Endothelial cell of umbilical vein (primary cell): ENCODE measurements at regions of chr15 and their contacts with region 1.

Region 1: DNA sequence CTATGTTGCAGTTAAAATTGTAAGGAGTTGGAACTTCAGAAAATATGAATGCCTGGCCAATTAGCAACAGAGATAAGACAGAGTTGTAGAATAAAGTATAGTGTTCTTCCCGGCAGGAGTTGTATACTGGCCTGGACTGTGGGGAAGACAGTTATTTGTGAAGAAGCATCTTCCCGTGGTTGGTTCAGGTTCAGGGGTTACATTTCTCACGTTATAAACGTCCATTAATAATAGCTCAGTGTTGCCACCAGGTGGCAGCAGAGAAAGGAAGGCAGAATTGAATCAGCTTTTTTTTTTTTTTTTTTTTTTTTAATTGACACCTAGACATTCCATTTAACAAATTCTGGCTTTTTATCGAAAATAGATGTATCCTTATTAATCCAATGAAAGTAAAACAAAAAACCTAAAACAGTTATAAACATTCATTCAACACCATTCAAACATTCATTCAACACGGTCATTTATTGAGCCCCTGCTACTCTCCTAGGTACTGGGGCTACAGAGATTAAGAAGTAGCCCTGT is 66.4 kb upstream of the NR2E3 start:
- DNase-seq: peak; percentile 53
- H3K4me3 ChIP-seq: no peak overlapping the region
- H3K27ac ChIP-seq: no peak overlapping the region
- H3K4me1 ChIP-seq: peaks cover 19% of the 10 kb centered on the region
- H3K27me3 ChIP-seq: no peaks in the 10 kb centered on the region
- CTCF ChIP-seq: peak; percentile 55 to 59
- POLR2A ChIP-seq: no peak

Region 2: GRCh38 chr15:71511796-71512681 is 231.9 kb before region 1 on chr15:
- CTCF ChIA-PET with region 1: no interaction called
- POLR2A ChIA-PET with region 1: no interaction called
- dilution Hi-C with region 1: no loop called
- intact Hi-C with region 1: no loop called
- DNase-seq: no peak
- H3K4me3 ChIP-seq: no peak overlapping the region
- H3K27ac ChIP-seq: no peak overlapping the region
- H3K4me1 ChIP-seq: no peaks in the 10 kb centered on the region
- H3K27me3 ChIP-seq: peaks cover 0 to 2% of the 10 kb centered on the region in 2 experiments
- CTCF ChIP-seq: no peak
- POLR2A ChIP-seq: no peak

Region 3: DNA sequence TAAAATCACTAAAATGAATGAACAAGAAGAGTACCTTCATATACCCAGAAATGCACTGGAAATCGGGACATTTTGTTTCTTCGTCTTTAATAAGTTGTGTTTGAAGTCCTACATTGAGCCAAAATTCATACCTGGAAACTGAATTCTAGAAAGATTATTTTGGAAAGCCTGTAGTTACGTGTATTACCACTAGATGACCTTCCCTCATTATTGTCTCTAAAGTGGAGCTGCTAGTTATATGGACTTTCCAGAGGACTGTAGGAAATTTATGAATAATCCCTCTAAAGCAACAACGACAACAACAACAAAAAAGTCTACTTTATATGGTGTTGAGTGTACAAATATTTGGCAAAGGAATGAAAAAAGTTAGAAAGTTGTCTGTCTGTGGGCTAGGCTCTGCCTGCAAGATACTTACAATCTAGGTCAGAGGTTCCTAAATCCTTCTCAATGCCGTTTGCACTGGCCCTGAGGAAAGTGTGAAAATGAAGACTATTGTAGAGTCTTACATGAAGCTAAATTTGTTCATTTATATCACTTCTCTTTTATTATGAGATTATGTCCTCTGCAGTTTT is 168.4 kb before region 1 on chr15:
- CTCF ChIA-PET with region 1: interaction called, 24 read pairs
- POLR2A ChIA-PET with region 1: no interaction called
- dilution Hi-C with region 1: no loop called
- intact Hi-C with region 1: no loop called
- DNase-seq: peak; percentile 24
- H3K4me3 ChIP-seq: no peak overlapping the region
- H3K27ac ChIP-seq: no peak overlapping the region
- H3K4me1 ChIP-seq: peaks cover 12% of the 10 kb centered on the region
- H3K27me3 ChIP-seq: no peaks in the 10 kb centered on the region
- CTCF ChIP-seq: peak; percentile 25 to 36
- POLR2A ChIP-seq: no peak

Region 4: DNA sequence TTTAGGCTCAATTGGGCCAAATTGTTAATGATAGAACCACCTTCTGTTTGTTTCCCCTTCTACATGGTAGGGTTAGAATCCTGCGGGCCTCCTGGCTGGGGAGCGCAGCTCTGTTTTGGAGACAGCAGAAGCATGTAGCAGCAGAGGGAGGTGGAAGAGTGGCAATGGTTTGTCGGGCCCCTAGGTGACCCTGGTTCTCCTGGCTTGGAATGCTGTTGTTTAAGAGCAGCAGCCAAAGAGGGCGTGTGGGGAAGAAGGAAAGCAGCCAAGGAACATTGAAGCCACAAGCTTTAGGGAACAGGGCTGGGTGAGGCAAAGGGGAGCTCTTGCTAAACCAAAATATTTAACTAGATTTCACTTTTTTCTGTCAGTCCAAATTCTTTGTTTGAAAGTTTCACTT is 147.2 kb before region 1 on chr15:
- CTCF ChIA-PET with region 1: no interaction called
- POLR2A ChIA-PET with region 1: no interaction called
- dilution Hi-C with region 1: no loop called
- intact Hi-C with region 1: no loop called
- DNase-seq: no peak
- H3K4me3 ChIP-seq: no peak overlapping the region
- H3K27ac ChIP-seq: no peak overlapping the region
- H3K4me1 ChIP-seq: no peaks in the 10 kb centered on the region
- H3K27me3 ChIP-seq: no peaks in the 10 kb centered on the region
- CTCF ChIP-seq: no peak
- POLR2A ChIP-seq: no peak

Region 5: GRCh38 chr15:71639471-71639870 is 104.5 kb before region 1 on chr15:
- CTCF ChIA-PET with region 1: no interaction called
- POLR2A ChIA-PET with region 1: no interaction called
- dilution Hi-C with region 1: no loop called
- intact Hi-C with region 1: no loop called
- DNase-seq: no peak
- H3K4me3 ChIP-seq: no peak overlapping the region
- H3K27ac ChIP-seq: no peak overlapping the region
- H3K4me1 ChIP-seq: peaks cover 7% of the 10 kb centered on the region
- H3K27me3 ChIP-seq: no peaks in the 10 kb centered on the region
- CTCF ChIP-seq: no peak
- POLR2A ChIP-seq: no peak

Region 6: DNA sequence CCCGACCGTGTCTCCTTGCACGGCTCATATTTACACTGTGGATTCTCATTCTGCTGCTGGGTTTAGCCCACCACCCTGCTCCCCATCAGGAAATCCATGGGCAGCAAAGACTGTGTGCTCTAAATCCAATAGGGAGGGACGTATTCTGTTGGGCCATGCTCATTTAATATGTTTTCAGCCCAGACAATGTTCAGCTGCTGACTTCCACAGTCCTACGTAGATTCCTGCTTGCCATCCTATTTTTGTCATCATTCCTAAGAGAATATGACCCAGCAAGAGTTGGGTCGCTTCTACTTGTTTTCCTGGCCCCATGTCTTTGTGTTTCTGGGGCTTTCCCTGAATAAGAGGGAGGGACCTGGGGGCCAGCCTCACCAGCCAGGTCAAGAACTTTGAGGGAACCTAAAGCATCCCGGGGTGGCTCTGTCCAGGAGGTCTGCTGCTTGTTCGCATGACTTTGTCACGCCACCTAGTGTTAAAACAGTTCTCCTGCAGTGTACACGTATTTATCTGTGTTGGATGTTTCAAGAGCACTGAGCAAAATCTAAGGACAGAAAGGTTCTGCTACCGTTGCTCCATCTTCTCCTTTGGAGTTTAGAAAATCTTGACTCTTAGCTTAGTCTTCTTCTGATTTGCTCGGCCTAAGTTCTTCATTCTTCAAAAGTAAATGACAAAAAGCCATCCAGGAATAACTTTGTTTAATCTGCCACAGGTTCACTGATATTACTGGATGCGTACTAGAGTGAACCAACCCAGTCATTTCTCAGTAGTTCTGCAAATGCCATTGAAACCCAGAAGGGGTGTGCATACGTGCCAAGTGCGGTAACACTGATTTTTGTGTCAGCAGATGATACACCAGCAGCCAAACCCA is 13.4 kb before region 1 on chr15:
- CTCF ChIA-PET with region 1: interaction called, 16 read pairs
- POLR2A ChIA-PET with region 1: no interaction called
- dilution Hi-C with region 1: no loop called
- intact Hi-C with region 1: no loop called
- DNase-seq: peak; percentile 66
- H3K4me3 ChIP-seq: no peak overlapping the region
- H3K27ac ChIP-seq: no peak overlapping the region
- H3K4me1 ChIP-seq: no peaks in the 10 kb centered on the region
- H3K27me3 ChIP-seq: peaks cover 0 to under 1% of the 10 kb centered on the region in 2 experiments
- CTCF ChIP-seq: peak; percentile 67 to 76
- POLR2A ChIP-seq: no peak

Region 7: DNA sequence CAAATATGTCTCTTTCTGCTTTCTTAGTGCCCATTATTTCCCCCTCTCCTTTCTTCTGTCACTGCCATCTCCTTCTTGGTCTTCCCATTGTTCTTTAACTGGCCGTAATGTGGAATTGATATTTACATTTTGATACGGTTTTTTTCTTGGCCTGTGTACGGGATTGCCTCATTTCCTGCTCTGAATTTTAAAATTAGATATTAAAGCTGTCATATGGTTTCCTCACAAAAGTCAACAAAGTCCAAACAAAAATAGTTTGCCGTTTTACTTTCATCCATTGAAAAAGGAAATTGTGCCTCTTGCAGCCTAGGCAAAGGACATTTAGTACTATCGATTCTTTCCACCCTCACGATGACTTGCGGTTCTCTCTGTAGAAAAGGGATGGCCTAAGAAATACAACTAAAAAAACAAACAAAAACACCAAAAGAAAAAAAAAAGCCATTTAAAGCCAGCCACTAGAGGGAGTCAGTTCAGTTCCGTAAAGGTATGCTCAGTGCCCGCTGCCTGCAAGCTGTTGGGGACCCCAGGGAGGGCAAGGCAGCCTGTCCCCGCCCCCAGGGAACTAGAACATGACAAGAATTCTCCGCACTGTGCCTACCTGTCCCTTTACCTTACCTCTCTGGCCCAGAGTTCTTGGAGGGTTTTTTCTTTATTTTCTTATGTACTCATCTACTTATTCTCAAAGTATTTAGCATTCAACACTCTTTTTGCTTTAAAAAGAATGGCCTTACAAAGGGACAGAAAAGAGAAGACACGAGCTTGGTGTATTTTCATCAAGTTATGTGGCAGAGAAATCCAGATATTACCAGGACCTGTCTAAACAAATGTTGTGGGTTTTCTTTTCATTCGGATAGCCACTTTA is 36.4 kb after region 1 on chr15:
- CTCF ChIA-PET with region 1: interaction called, 14 read pairs
- POLR2A ChIA-PET with region 1: no interaction called
- dilution Hi-C with region 1: no loop called
- intact Hi-C with region 1: no loop called
- DNase-seq: peak; percentile 84
- H3K4me3 ChIP-seq: peak overlapping the region in 1 of 3 experiments; percentile 51
- H3K27ac ChIP-seq: peak overlapping the region; percentile 86
- H3K4me1 ChIP-seq: peaks cover 19% of the 10 kb centered on the region
- H3K27me3 ChIP-seq: no peaks in the 10 kb centered on the region
- CTCF ChIP-seq: peak; percentile 76 to 77
- POLR2A ChIP-seq: no peak

Region 8: GRCh38 chr15:71853543-71853942 is 109.6 kb after region 1 on chr15:
- CTCF ChIA-PET with region 1: interaction called, 21 read pairs
- POLR2A ChIA-PET with region 1: no interaction called
- dilution Hi-C with region 1: no loop called
- intact Hi-C with region 1: no loop called
- DNase-seq: no peak
- H3K4me3 ChIP-seq: no peak overlapping the region
- H3K27ac ChIP-seq: no peak overlapping the region
- H3K4me1 ChIP-seq: no peaks in the 10 kb centered on the region
- H3K27me3 ChIP-seq: no peaks in the 10 kb centered on the region
- CTCF ChIP-seq: no peak
- POLR2A ChIP-seq: no peak